ENCODE measurements at regions of chr12 and their contacts with region 1.

Region 1: GRCh38 chr12:69932676-69933552 is 107.9 kb downstream of the MYRFL start:
- DNase-seq: no peak
- H3K4me3 ChIP-seq: no peak overlapping the region
- H3K27ac ChIP-seq: no peak overlapping the region
- H3K4me1 ChIP-seq: no peaks in the 10 kb centered on the region
- H3K27me3 ChIP-seq: no peaks in the 10 kb centered on the region
- CTCF ChIP-seq: no peak
- EP300 ChIP-seq: no peak
- POLR2A ChIP-seq: no peak

Region 2: GRCh38 chr12:69949311-69950002 is 16.5 kb after region 1 on chr12:
- intact Hi-C with region 1: loop called in 1 of 4 experiments (anchors 2 kb)
- DNase-seq: no peak
- H3K4me3 ChIP-seq: no peak overlapping the region
- H3K27ac ChIP-seq: no peak overlapping the region
- H3K4me1 ChIP-seq: no peaks in the 10 kb centered on the region
- H3K27me3 ChIP-seq: no peaks in the 10 kb centered on the region
- CTCF ChIP-seq: no peak
- EP300 ChIP-seq: no peak
- POLR2A ChIP-seq: no peak

Measured in ovary (tissue), 10 donors.